Ascending aorta (tissue), 2 donors: ENCODE measurements at regions of chr6 and their contacts with region 1.

Region 1: DNA sequence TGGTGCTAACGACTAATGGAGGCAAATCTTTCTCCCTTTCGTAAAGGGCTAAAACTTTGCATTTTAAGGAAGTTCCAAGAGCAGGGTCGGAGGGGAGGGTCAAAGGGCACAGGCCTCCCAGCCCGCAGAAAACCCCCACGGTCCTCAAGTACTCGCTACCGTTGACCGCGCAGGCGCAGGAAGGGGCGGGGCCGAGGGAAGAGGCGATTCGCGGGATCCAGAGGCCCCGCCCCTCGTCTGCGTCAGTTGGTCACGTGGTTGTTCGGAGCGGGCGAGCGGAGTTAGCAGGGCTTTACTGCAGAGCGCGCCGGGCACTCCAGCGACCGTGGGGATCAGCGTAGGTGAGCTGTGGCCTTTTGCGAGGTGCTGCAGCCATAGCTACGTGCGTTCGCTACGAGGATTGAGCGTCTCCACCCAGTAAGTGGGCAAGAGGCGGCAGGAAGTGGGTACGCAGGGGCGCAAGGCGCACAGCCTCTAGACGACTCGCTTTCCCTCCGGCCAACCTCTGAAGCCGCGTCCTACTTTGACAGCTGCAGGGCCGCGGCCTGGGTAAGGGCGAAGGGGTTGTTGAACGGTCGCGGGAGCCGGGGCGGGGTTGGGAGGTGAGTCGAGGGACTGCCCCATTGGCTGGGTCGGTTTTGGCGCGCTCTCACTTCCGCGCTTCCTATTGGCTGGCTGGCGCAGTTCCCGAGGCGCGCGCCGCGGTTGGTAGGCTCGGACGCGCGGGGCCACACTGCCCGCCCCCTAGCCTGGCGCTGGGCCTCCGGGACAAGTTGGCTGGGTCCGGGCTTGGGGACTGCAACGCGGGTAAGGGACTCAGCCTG is at the start of gene GMNN:
- DNase-seq: peak; percentile 81 to 98
- H3K4me3 ChIP-seq: peak within 1 kb of the TSS; percentile 85 to 98
- H3K27ac ChIP-seq: peak within 1 kb of the TSS; percentile 86 to 95
- H3K4me1 ChIP-seq: peaks cover 0 to 9% of the 10 kb centered on the region in 2 donors
- H3K27me3 ChIP-seq: no peaks in the 10 kb centered on the region
- CTCF ChIP-seq: no peak
- total RNA-seq, gene GMNN: 8.1 TPM

Region 2: DNA sequence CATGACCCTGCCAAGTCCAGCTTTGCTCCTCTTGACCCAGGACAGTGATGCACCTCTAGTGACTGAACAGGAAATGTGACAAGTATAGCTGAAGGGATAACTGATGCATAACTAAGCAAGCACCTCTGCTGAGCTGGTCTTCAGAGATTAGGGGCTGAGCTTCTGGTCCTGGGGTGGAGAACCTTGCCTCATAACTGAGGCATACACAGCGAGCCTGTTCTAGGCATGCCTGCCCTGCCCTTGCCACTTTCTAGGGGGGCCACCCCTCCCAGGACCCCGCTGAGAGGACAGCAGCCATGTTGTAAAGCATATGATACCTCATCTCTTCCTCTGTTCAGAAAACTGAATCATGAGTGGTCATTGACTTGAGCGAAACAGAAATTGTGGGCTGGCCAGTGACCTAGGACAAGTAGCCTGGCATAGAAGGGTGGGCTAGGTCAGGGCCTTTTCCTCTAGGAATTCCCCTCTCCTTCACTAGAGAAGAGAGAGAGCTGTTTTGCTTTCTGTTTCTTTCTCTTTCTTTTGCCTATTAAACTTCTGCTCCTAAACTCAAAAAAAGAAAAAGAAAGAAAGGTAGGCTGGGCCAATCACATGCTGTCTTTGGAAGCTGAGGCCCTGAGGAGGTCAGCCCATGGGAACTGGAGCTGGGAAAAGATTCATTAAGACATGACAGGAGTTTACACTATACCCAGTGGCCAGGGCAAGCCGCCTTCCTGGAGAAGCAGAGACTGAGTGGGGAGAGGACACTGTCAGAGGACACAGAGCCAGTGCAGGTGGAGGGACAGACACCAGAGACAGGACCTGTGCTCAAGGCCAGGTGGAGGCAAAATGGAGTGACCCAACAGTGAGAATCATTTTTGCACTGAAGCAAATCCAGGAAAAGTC is 257.0 kb before region 1 on chr6:
- intact Hi-C with region 1: no loop called
- DNase-seq: no peak
- H3K4me3 ChIP-seq: no peak overlapping the region
- H3K27ac ChIP-seq: no peak overlapping the region
- H3K4me1 ChIP-seq: no peaks in the 10 kb centered on the region
- H3K27me3 ChIP-seq: no peaks in the 10 kb centered on the region
- CTCF ChIP-seq: no peak

Region 3: DNA sequence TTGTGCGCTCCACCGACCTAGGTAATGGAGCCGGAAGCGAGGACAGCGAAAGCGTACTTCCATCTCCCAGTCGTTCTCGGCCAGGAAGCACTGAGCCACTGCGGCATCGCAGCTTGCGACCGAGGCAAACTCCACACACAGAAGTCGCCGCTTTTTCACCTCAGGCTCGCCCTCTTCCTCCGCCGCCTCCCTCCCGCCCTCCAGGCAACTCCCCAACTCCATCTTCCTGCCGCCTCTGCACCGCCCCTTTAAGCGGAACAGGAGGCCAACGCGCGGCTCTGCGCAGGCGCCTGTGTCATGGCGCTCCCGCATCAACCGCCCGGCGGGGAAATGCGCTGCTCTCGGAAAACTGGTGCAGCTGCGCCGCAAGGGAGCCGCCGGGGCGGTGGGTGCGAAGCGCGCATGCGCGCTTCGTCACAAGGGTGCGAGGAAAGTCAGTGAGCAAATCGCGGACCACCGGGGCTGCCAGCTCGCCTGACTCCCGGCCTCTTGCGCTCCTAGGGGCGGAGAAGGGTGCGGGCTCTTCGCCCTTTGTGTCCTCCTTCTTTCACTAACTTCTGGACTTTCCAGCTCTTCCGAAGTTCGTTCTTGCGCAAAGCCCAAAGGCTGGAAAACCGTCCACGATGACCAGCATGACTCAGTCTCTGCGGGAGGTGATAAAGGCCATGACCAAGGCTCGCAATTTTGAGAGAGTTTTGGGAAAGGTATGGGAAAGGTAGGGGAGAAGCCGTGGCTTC is 108.1 kb before region 1 on chr6 and contains the starts of genes ACOT13 and TDP2:
- intact Hi-C with region 1: loop called (anchors 5 kb)
- DNase-seq: peak; percentile 86 to 98
- H3K4me3 ChIP-seq: peak within 1 kb of the TSS; percentile 85 to 99
- H3K27ac ChIP-seq: peak within 1 kb of the TSS; percentile 90 to 95
- H3K4me1 ChIP-seq: peaks cover 4 to 13% of the 10 kb centered on the region in 2 donors
- H3K27me3 ChIP-seq: no peaks in the 10 kb centered on the region
- CTCF ChIP-seq: peak; percentile 50 to 74 (median 52)
- total RNA-seq, gene ACOT13: 3.1 TPM
- total RNA-seq, gene TDP2: 5.6 TPM

Region 4: GRCh38 chr6:25359191-25359861 is 584.4 kb after region 1 on chr6:
- intact Hi-C with region 1: no loop called
- DNase-seq: peak in 1 of 2 donors; percentile 85
- H3K4me3 ChIP-seq: peak overlapping the region in 1 of 2 donors; percentile 23
- H3K27ac ChIP-seq: peak overlapping the region; percentile 77 to 91
- H3K4me1 ChIP-seq: peaks cover 9 to 76% of the 10 kb centered on the region in 2 donors
- H3K27me3 ChIP-seq: no peaks in the 10 kb centered on the region
- CTCF ChIP-seq: no peak